Left cardiac atrium (tissue), 4 donors: ENCODE measurements at regions of chr11 and their contacts with region 1.

Region 1: DNA sequence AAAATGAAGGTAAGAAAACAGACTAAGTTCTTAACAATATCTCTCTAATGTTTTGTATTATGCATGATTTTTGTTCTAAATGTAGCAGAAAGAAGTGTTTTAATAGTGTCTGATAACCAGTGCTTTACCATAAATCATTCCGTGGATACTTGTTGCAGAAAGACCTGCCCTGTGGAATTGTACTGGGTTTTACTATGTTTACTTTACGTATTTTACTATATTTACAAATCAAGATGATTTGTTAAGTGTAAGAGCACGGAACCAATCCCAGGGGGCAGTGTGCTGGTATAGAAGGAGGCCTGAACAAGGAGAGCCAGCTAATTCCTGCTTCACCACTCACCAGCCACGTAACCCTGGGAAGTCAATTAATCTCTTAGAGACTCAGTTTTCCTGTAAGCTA is 1.4 kb downstream of the HTR3B start:
- DNase-seq: no peak
- ATAC-seq: no peak

Region 2: DNA sequence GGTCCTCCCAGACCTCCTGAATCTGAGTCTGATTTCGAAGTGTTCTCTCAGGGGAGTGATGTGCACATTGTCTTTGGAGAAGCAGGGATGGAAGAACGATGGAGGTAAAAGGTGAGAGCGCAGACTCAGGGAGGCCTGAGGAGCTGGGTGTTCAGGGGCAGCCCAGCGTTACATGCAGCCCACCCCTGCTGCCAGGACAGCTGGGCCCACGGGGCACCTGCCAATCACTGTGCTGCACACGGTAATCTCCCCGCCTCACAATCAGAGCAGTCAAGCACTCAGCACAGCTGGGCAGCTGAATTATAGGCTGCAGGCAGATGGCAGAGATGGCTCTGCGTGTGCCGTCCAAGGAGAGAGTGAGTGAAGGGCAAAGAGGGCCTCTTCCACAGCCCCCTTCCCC is 50.9 kb after region 1 on chr11:
- intact Hi-C with region 1: no loop called
- DNase-seq: no peak
- ATAC-seq: no peak

Region 3: GRCh38 chr11:113974741-113975470 is 68.9 kb after region 1 on chr11 and contains the start of gene HTR3A:
- intact Hi-C with region 1: loop called in 1 of 2 experiments (anchors 5 kb)
- DNase-seq: peak; percentile 79
- ATAC-seq: peak; percentile 94 to 95
- total RNA-seq, gene HTR3A: 0.18 TPM in 1 of 2 donors, not detected in the other

Region 4: GRCh38 chr11:114017723-114018122 is 111.7 kb after region 1 on chr11:
- intact Hi-C with region 1: loop called in 1 of 2 experiments (anchors 10 kb)
- DNase-seq: no peak
- ATAC-seq: peak; percentile 41 to 70

Region 5: GRCh38 chr11:114358716-114359115 is 452.7 kb after region 1 on chr11:
- intact Hi-C with region 1: no loop called
- DNase-seq: no peak
- ATAC-seq: peak; percentile 38 to 49